Naive thymus-derived CD4-positive, alpha-beta T cell (primary cell): ENCODE measurements at regions of chr20 and their contacts with region 1.

Region 1: DNA sequence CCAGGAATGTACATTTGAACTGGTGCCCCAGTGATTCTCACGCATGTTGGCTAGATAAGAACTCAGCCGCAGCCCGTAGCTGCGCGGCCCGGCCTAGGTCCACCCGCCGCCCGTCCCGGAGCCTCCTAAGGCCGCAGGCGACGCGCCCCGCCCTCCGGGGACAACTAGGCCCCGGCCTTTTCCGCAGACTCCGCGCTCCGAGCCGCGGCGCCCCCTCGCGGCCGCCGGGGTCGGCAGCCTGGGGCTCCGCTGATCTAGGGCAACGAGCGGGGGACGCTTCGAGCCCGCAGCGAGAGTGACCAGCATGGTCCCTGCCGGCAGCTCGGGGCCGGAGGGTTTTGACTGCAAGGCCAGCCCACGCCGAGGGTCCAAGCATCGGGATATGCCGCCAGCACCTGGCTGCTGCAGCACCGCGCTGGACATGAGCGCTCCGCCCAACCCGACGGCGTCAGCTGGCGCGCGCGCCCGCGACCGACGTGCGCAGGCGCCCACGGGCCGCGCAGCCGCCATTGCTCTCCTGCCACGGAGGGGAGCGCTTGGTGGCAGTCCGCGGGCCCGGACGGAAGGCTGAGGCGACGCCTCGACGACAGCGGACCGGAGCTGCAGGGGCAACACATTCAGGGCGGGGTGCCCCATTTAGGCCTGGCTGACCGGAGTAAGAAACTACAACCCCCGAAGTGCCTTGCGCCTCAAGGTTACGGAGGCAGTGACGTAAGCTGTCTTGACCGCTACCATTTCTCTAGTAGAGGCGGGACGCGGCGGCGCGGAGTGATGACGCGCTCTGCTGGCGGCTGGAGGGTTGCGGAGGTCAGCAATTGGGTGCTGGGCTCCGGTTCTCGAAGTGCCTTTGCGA is at the start of gene AP5S1:
- DNase-seq: peak; percentile 87 to 96 (median 92)
- ATAC-seq: peak; percentile 92
- H3K4me3 ChIP-seq: peak within 1 kb of the TSS; percentile 90
- H3K4me3 Mint-ChIP-seq: peak within 1 kb of the TSS; percentile 85 to 95 (median 92)
- H3K27ac ChIP-seq: peak within 1 kb of the TSS; percentile 98
- H3K27ac Mint-ChIP-seq: peak within 1 kb of the TSS; percentile 94 to 99 (median 97)
- H3K4me1 ChIP-seq: peaks cover 35 to 41% of the 10 kb centered on the region in 2 donors
- H3K4me1 Mint-ChIP-seq: peaks cover 19 to 54% (median 47%) of the 10 kb centered on the region in 7 donors
- H3K27me3 ChIP-seq: no peaks in the 10 kb centered on the region
- H3K27me3 Mint-ChIP-seq: no peaks in the 10 kb centered on the region
- total RNA-seq, gene AP5S1: 7.9 to 14.0 (median 10.8) TPM

Region 2: DNA sequence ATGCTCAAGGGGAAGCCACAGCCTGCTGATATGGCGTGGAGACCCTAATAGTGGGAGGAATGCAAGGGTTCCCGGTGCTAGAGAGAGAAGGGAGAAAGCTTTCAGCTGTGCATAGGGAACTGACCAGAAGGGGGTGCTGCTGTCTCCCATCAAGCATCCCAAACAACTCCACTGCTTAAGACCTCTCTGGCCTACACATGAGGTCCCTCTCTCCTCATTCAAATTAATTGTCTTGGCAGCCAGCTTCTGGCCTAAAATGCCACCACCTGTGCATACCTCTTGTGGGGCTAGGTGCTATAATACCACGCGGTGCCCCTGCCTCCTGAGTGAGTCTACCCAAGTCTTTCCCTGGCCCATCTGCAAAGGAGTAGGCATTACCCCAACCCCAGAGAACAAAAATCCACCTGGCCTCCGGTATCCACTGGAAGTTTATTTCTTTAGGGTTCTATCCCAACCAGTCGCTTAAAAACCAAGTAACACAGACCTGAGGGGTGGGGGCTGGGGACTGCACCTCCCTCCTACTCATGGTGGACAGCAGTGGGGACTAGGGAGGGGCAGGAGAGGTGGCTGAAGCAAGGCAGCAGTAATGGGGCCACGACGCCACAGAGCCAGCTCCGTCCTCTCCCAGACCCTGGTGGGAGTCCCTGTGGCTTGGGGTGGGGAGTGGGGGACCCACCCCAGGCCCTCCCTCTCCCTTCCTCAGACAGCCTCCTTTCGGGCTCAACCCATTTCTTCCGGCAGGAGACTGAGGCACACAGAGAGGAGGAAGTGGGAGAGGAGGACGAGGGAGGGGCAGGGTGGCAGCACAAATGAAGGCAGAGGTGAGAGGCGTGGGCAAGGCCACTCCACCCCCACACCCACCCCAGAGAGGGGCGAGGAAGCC is 66.9 kb before region 1 on chr20:
- CTCF ChIA-PET with region 1: no interaction called
- POLR2A ChIA-PET with region 1: interaction called, 5 read pairs
- intact Hi-C with region 1: loop called (anchors 1 kb)
- DNase-seq: peak in 8 of 9 donors; percentile 33 to 64 (median 56)
- ATAC-seq: peak; percentile 82
- H3K4me3 ChIP-seq: no peak overlapping the region
- H3K4me3 Mint-ChIP-seq: peak overlapping the region in 5 of 10 donors; percentile 32 to 83 (median 41)
- H3K27ac ChIP-seq: no peak overlapping the region
- H3K27ac Mint-ChIP-seq: peak overlapping the region in 5 of 9 donors; percentile 15 to 86 (median 47)
- H3K4me1 ChIP-seq: peaks cover 0 to 5% of the 10 kb centered on the region in 2 donors
- H3K4me1 Mint-ChIP-seq: peaks cover 0 to 15% (median 4%) of the 10 kb centered on the region in 7 donors
- H3K27me3 ChIP-seq: no peaks in the 10 kb centered on the region
- H3K27me3 Mint-ChIP-seq: no peaks in the 10 kb centered on the region

Region 3: GRCh38 chr20:3786665-3787323 is 33.5 kb before region 1 on chr20 and contains the start of gene CENPB:
- CTCF ChIA-PET with region 1: interaction called, 82 read pairs
- POLR2A ChIA-PET with region 1: interaction called, 85 read pairs
- intact Hi-C with region 1: loop called (anchors 1 kb)
- DNase-seq: peak; percentile 74 to 98 (median 88)
- ATAC-seq: peak; percentile 96
- H3K4me3 ChIP-seq: peak within 1 kb of the TSS; percentile 29
- H3K4me3 Mint-ChIP-seq: peak within 1 kb of the TSS; percentile 76 to 87 (median 83)
- H3K27ac ChIP-seq: peak within 1 kb of the TSS; percentile 62
- H3K27ac Mint-ChIP-seq: peak within 1 kb of the TSS; percentile 51 to 90 (median 76)
- H3K4me1 ChIP-seq: peaks cover 7 to 9% of the 10 kb centered on the region in 2 donors
- H3K4me1 Mint-ChIP-seq: peaks cover 30 to 45% (median 41%) of the 10 kb centered on the region in 7 donors
- H3K27me3 ChIP-seq: no peaks in the 10 kb centered on the region
- H3K27me3 Mint-ChIP-seq: peaks cover 0 to 12% (median 0%) of the 10 kb centered on the region in 5 donors
- total RNA-seq, gene CENPB: 35.3 to 73.6 (median 50.0) TPM

Region 4: GRCh38 chr20:3846740-3847428 is 26.6 kb after region 1 on chr20 and contains the start of gene MAVS:
- CTCF ChIA-PET with region 1: interaction called, 4 read pairs
- POLR2A ChIA-PET with region 1: interaction called, 6 read pairs
- intact Hi-C with region 1: loop called (anchors 1 kb)
- DNase-seq: peak; percentile 76 to 93 (median 82)
- ATAC-seq: peak; percentile 100
- H3K4me3 ChIP-seq: peak within 1 kb of the TSS; percentile 86
- H3K4me3 Mint-ChIP-seq: peak within 1 kb of the TSS; percentile 85 to 93 (median 90)
- H3K27ac ChIP-seq: peak within 1 kb of the TSS; percentile 96
- H3K27ac Mint-ChIP-seq: peak within 1 kb of the TSS; percentile 59 to 95 (median 90)
- H3K4me1 ChIP-seq: peaks cover 0 to 10% of the 10 kb centered on the region in 2 donors
- H3K4me1 Mint-ChIP-seq: peaks cover 16 to 30% (median 27%) of the 10 kb centered on the region in 7 donors
- H3K27me3 ChIP-seq: no peaks in the 10 kb centered on the region
- H3K27me3 Mint-ChIP-seq: no peaks in the 10 kb centered on the region
- total RNA-seq, gene MAVS: 23.3 to 49.9 (median 41.5) TPM

Region 5: GRCh38 chr20:3888622-3889488 is 68.6 kb after region 1 on chr20 and contains the start of gene PANK2:
- CTCF ChIA-PET with region 1: no interaction called
- POLR2A ChIA-PET with region 1: interaction called, 7 read pairs
- intact Hi-C with region 1: loop called (anchors 1 kb)
- DNase-seq: peak; percentile 85 to 96 (median 94)
- ATAC-seq: peak; percentile 98
- H3K4me3 ChIP-seq: peak within 1 kb of the TSS; percentile 82
- H3K4me3 Mint-ChIP-seq: peak within 1 kb of the TSS; percentile 96 to 100 (median 98)
- H3K27ac ChIP-seq: peak within 1 kb of the TSS; percentile 91
- H3K27ac Mint-ChIP-seq: peak within 1 kb of the TSS; percentile 87 to 99 (median 97)
- H3K4me1 ChIP-seq: peaks cover 10 to 25% of the 10 kb centered on the region in 2 donors
- H3K4me1 Mint-ChIP-seq: peaks cover 42 to 64% (median 55%) of the 10 kb centered on the region in 7 donors
- H3K27me3 ChIP-seq: no peaks in the 10 kb centered on the region
- H3K27me3 Mint-ChIP-seq: no peaks in the 10 kb centered on the region
- total RNA-seq, gene PANK2: 42.4 to 69.7 (median 59.1) TPM

Region 6: DNA sequence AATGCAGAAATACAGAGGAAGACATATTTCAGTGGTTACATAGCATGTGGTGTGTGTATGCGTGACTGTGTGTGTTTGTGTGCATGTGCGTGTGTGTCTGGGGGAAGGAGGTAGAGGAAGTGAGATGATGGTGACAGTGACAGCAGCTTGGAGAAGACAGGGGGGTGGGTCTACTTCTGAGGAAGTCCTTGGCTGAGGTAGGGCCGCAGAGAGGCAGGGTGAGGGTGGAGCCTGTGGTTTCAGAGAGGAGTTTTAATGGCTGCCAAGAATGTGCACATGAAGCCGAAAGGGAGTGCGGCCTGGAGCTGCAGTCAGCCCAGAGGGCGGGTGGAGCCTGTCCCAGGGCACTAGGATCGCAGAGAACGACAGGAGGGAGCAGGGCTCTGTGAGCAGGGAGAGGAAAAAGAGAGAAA is 217.8 kb after region 1 on chr20:
- CTCF ChIA-PET with region 1: no interaction called
- POLR2A ChIA-PET with region 1: no interaction called
- intact Hi-C with region 1: loop called (anchors 1 to 2 kb)
- DNase-seq: peak; percentile 51 to 93 (median 89)
- ATAC-seq: peak; percentile 100
- H3K4me3 ChIP-seq: peak overlapping the region; percentile 34
- H3K4me3 Mint-ChIP-seq: peak overlapping the region; percentile 72 to 92 (median 84)
- H3K27ac ChIP-seq: peak overlapping the region; percentile 57
- H3K27ac Mint-ChIP-seq: peak overlapping the region; percentile 92 to 99 (median 95)
- H3K4me1 ChIP-seq: peaks cover 16 to 18% of the 10 kb centered on the region in 2 donors
- H3K4me1 Mint-ChIP-seq: peaks cover 10 to 27% (median 19%) of the 10 kb centered on the region in 7 donors
- H3K27me3 ChIP-seq: no peaks in the 10 kb centered on the region
- H3K27me3 Mint-ChIP-seq: no peaks in the 10 kb centered on the region